MCF 10A (cell line): ENCODE measurements at regions of chr14 and their contacts with region 1.

Region 1: GRCh38 chr14:51651388-51652167 is at the start of gene FRMD6:
- DNase-seq: peak; percentile 87
- H3K4me3 Mint-ChIP-seq: peak within 1 kb of the TSS; percentile 77
- H3K27ac Mint-ChIP-seq: peak within 1 kb of the TSS; percentile 77
- H3K4me1 Mint-ChIP-seq: peaks cover 36% of the 10 kb centered on the region
- H3K27me3 Mint-ChIP-seq: no peaks in the 10 kb centered on the region
- CTCF ChIP-seq: peak; percentile 90
- total RNA-seq, gene FRMD6: 104 and 135 TPM in 2 replicates

Region 2: DNA sequence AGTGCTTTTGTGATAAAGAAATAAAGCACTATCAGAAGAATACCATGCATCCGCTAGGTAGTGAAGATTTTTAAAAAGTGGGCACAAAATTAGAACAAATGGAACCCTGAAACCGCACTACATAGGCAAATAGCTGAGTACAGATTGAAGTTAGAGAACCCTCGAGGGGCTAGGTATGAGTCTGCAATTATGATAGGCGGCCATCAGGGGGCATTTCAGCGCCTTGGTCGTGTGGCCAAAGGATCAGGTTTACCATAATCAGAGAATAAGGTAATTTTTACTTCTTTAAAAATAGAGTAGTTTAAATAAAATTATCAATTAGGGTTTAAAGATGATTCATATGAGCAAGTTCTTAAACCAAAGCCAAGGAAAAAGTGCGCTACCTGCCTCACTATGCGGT is 281.8 kb before region 1 on chr14:
- CTCF ChIA-PET with region 1: interaction called, 3 read pairs
- POLR2A ChIA-PET with region 1: interaction called, 4 read pairs
- intact Hi-C with region 1: loop called (anchors 5 kb)
- DNase-seq: peak; percentile 55
- H3K4me3 Mint-ChIP-seq: no peak overlapping the region
- H3K27ac Mint-ChIP-seq: no peak overlapping the region
- H3K4me1 Mint-ChIP-seq: peaks cover 20% of the 10 kb centered on the region
- H3K27me3 Mint-ChIP-seq: no peaks in the 10 kb centered on the region
- CTCF ChIP-seq: peak; percentile 47

Region 3: DNA sequence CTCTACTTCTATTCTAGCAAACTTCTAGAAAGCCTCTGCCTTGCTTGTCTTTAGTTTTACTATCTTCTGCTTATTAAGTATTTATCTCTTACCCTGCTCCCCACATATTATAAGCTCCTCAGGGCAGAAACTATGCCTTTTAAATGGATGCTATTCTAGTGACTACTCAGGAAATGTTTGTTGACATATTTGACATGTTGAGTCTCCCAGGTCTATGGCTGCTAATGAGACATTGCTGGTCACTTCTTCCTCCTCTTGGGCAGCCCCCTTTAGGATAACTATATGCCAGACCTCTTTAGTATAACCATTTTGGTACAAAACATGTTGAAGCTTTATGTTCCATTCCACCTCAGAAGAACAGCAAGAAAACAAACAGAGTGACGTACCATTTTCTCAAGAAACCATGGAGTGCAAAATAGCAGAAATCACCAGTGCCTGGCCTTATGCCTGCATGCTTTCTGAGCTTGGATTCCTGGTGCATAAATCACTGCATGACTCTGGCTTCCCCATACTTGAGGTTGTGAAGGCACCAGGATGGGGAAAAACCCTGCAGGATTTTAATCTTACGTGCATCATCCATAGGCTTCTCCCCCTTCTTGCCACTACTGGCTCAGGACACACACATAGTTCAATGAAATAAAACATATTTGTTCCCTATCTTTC is 208.9 kb before region 1 on chr14:
- CTCF ChIA-PET with region 1: no interaction called
- POLR2A ChIA-PET with region 1: interaction called, 3 read pairs
- intact Hi-C with region 1: loop called (anchors 2 kb)
- DNase-seq: peak; percentile 85
- H3K4me3 Mint-ChIP-seq: peak overlapping the region; percentile 1
- H3K27ac Mint-ChIP-seq: peak overlapping the region; percentile 90
- H3K4me1 Mint-ChIP-seq: peaks cover 32% of the 10 kb centered on the region
- H3K27me3 Mint-ChIP-seq: no peaks in the 10 kb centered on the region
- CTCF ChIP-seq: no peak

Region 4: DNA sequence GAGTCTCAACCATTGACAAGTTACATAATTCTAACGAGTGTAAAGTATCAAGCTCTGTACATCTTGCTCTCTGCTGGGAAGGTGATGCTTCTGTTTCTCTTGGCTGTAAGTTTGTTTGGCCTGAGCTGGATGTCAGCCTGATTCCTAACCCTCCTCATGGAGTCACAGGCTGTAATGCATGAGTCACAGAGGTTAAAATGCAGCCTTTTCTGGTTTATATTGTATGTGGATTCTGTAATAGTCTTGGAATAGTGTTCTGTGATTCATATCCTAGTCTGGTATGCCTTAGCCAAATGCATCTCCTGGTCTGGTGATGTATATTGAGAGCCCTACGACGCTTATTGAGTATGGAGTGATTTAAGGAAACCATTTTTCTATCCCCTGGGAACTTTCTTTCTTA is 104.3 kb before region 1 on chr14:
- CTCF ChIA-PET with region 1: interaction called, 4 read pairs
- POLR2A ChIA-PET with region 1: interaction called, 33 read pairs
- intact Hi-C with region 1: loop called (anchors 1 kb)
- DNase-seq: peak; percentile 99
- H3K4me3 Mint-ChIP-seq: peak overlapping the region; percentile 46
- H3K27ac Mint-ChIP-seq: peak overlapping the region; percentile 94
- H3K4me1 Mint-ChIP-seq: peaks cover 45% of the 10 kb centered on the region
- H3K27me3 Mint-ChIP-seq: no peaks in the 10 kb centered on the region
- CTCF ChIP-seq: no peak

Region 5: GRCh38 chr14:51630801-51631386 is 20.7 kb before region 1 on chr14:
- CTCF ChIA-PET with region 1: no interaction called
- POLR2A ChIA-PET with region 1: no interaction called
- intact Hi-C with region 1: no loop called
- DNase-seq: no peak
- H3K4me3 Mint-ChIP-seq: no peak overlapping the region
- H3K27ac Mint-ChIP-seq: no peak overlapping the region
- H3K4me1 Mint-ChIP-seq: peaks cover 14% of the 10 kb centered on the region
- H3K27me3 Mint-ChIP-seq: no peaks in the 10 kb centered on the region
- CTCF ChIP-seq: no peak

Region 6: DNA sequence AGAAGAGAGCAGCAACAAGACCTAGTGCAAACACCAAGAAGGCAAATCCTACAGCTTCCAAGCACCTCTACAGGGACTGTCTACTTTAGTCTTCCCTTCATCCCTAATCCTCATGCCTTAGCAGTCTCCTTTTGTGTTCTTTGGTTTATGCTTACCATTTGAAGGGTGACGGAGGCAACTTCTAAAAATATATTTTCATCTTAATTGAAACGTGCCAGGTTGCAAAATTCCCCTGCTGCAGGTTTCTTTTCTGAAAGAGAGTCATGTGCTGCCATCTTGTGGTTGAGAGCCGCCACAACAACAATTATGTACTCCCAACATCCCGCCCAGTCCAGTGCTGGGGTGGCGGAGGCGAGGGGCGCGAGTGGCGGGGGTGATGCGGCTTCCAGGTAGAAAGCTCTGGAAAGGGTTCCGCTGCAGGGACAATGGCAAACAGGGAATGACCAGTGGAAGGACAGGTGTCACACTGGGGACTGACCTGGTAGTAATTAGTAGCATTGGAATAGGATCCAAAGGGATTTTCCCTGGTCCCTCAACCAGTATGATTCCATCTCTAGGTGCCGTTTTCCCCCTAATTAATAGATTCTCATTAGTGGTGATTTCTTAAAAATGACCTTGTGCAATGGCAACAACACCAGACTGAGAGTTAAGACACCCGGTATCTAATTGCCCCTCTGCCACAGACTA is 128.6 kb after region 1 on chr14:
- CTCF ChIA-PET with region 1: interaction called, 20 read pairs
- POLR2A ChIA-PET with region 1: interaction called, 11 read pairs
- intact Hi-C with region 1: loop called (anchors 2 kb)
- DNase-seq: peak; percentile 77
- H3K4me3 Mint-ChIP-seq: no peak overlapping the region
- H3K27ac Mint-ChIP-seq: no peak overlapping the region
- H3K4me1 Mint-ChIP-seq: peaks cover 23% of the 10 kb centered on the region
- H3K27me3 Mint-ChIP-seq: no peaks in the 10 kb centered on the region
- CTCF ChIP-seq: peak; percentile 68

Region 7: DNA sequence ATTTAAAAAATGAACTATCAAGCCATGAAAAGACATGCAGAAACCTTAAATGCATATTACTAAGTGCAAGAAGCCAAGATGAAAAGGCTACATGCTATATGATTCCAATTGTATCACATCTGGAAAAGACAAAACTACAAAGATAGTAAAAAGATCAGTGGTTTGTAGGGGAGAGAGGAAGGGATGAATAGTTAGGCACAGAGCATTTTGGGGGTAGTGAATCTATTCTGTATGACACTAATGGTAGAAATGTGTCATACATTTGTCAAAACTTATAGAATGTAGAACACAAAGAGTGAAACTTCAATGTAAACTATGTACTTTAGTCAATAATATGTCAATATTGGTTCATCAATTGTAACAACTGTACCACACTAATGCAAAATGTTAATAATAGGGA is 879.9 kb after region 1 on chr14:
- CTCF ChIA-PET with region 1: no interaction called
- POLR2A ChIA-PET with region 1: no interaction called
- intact Hi-C with region 1: no loop called
- DNase-seq: no peak
- H3K4me3 Mint-ChIP-seq: no peak overlapping the region
- H3K27ac Mint-ChIP-seq: no peak overlapping the region
- H3K4me1 Mint-ChIP-seq: no peaks in the 10 kb centered on the region
- H3K27me3 Mint-ChIP-seq: no peaks in the 10 kb centered on the region
- CTCF ChIP-seq: no peak